PC-3 (cell line): ENCODE measurements at regions of chr2 and their contacts with region 1.

Region 1: DNA sequence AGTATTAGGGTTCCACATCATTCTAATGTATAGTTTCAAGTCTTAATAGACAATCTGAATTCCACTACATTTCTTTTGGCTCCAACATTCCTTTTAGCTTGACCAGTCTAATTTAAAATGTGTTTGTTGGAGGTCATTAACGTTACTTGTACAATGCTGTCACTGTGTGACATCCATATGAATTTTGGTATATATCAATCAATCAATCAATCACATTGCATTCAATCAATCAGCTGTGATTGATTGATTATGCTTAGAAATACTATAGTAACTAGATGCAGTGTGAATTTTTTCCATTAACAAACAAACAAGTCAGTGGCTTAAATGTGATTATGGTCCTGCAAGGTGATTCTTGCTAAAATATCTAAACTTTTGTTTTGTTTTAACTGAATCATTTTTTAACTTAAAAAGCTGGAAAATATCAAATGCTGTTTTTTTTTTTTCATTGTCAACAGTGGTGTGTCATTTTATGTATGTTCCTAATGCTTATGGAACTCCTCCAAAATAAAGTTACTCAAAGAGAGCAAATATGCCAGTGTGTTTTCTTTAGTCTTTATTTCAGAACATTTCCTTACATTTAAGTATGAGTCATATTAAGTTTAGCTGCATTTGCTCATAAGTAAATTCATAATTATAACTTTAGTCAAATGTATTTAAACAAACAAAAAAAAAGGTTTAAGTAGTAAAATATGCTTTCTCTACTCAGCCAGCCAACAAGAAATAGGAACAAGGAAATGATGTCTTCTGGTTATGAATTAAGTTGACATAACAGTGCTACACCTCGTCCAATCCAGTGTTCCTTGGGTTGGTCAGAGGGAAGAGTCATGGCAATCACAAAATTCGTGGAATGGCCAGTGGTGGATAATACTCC is 80.4 kb downstream of the SLC39A10 start:
- DNase-seq: peak; percentile 88
- ATAC-seq: peak; percentile 79
- H3K4me3 ChIP-seq: peak overlapping the region; percentile 13; the same call in 1 of the 2 replicates
- H3K27ac ChIP-seq: peak overlapping the region; percentile 84
- H3K4me1 ChIP-seq: peaks cover 42% of the 10 kb centered on the region
- H3K27me3 ChIP-seq: no peaks in the 10 kb centered on the region
- CTCF ChIP-seq: no peak

Region 2: GRCh38 chr2:195664528-195664927 is 72.9 kb before region 1 on chr2:
- CTCF ChIA-PET with region 1: no interaction called
- POLR2A ChIA-PET with region 1: interaction called, 3 read pairs
- intact Hi-C with region 1: loop called (anchors 2 kb)
- DNase-seq: peak; percentile 48
- ATAC-seq: peak; percentile 45; the same call in 1 of the 2 replicates
- H3K4me3 ChIP-seq: no peak overlapping the region
- H3K27ac ChIP-seq: no peak overlapping the region
- H3K4me1 ChIP-seq: peaks cover 6% of the 10 kb centered on the region
- H3K27me3 ChIP-seq: no peaks in the 10 kb centered on the region
- CTCF ChIP-seq: peak; percentile 44

Region 3: GRCh38 chr2:195709901-195710806 is 27.3 kb before region 1 on chr2:
- CTCF ChIA-PET with region 1: no interaction called
- POLR2A ChIA-PET with region 1: no interaction called
- intact Hi-C with region 1: loop called (anchors 1 kb)
- DNase-seq: peak; percentile 42
- ATAC-seq: peak; percentile 91
- H3K4me3 ChIP-seq: no peak overlapping the region
- H3K27ac ChIP-seq: peak overlapping the region; percentile 47
- H3K4me1 ChIP-seq: peaks cover 15% of the 10 kb centered on the region
- H3K27me3 ChIP-seq: no peaks in the 10 kb centered on the region
- CTCF ChIP-seq: no peak

Region 4: GRCh38 chr2:195879153-195879552 is 141.7 kb after region 1 on chr2:
- CTCF ChIA-PET with region 1: no interaction called
- POLR2A ChIA-PET with region 1: no interaction called
- intact Hi-C with region 1: loop called (anchors 5 kb)
- DNase-seq: peak; percentile 12
- ATAC-seq: peak; percentile 48
- H3K4me3 ChIP-seq: no peak overlapping the region
- H3K27ac ChIP-seq: no peak overlapping the region
- H3K4me1 ChIP-seq: peaks cover 8% of the 10 kb centered on the region; the same call in 1 of the 2 replicates
- H3K27me3 ChIP-seq: no peaks in the 10 kb centered on the region
- CTCF ChIP-seq: no peak

Region 5: GRCh38 chr2:196068271-196069209 is 331.1 kb after region 1 on chr2 and contains the start of gene DNAH7:
- CTCF ChIA-PET with region 1: no interaction called
- POLR2A ChIA-PET with region 1: no interaction called
- intact Hi-C with region 1: loop called (anchors 5 kb)
- DNase-seq: peak; percentile 77
- ATAC-seq: peak; percentile 93
- H3K4me3 ChIP-seq: peak within 1 kb of the TSS; percentile 83
- H3K27ac ChIP-seq: no peak within 1 kb of the TSS
- H3K4me1 ChIP-seq: peaks cover 15% of the 10 kb centered on the region
- H3K27me3 ChIP-seq: no peaks in the 10 kb centered on the region
- CTCF ChIP-seq: peak; percentile 67
- total RNA-seq, gene DNAH7: 1.9 and 3.1 TPM in 2 replicates